Breast epithelium (tissue), 4 donors: ENCODE measurements at regions of chr9 and their contacts with region 1.

Region 1: DNA sequence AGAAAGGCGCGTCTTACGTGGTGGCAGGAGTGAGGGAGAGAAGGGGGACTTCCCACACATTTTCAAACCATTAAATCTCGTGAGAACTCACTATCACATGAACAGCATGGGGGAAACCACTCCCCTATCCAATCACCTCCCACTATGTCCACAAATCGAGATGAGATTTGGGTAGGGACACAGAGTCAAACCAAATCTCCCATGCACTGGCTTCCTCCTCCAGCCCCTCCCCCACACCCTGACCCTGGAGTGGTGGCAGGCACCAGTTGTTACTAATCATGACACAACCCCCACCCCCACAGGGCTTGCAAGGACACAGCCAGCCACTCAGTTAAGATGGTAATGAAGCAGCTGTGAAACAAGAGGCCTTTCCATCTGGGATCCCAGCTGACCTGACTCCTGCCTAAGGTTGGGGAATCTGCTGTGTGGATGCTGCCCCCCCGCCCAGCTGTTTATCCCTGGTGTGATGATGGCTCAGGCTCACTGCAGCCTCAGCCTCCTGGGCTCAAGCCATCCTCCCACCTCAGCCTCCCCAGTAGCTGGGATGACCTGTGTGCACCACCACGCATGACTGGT is 57.1 kb upstream of the FUBP3 start:
- DNase-seq: no peak
- H3K4me3 ChIP-seq: no peak overlapping the region
- H3K27ac ChIP-seq: no peak overlapping the region
- H3K4me1 ChIP-seq: no peaks in the 10 kb centered on the region
- H3K27me3 ChIP-seq: peaks cover 0 to 6% of the 10 kb centered on the region in 2 donors
- CTCF ChIP-seq: no peak
- POLR2A ChIP-seq: no peak

Region 2: GRCh38 chr9:130537346-130538050 is 15.2 kb after region 1 on chr9:
- intact Hi-C with region 1: loop called (anchors 1 kb)
- DNase-seq: no peak
- H3K4me3 ChIP-seq: no peak overlapping the region
- H3K27ac ChIP-seq: no peak overlapping the region
- H3K4me1 ChIP-seq: no peaks in the 10 kb centered on the region
- H3K27me3 ChIP-seq: peaks cover 5 to 55% of the 10 kb centered on the region in 2 donors
- CTCF ChIP-seq: no peak
- POLR2A ChIP-seq: no peak

Region 3: GRCh38 chr9:130770679-130771442 is 248.5 kb after region 1 on chr9:
- intact Hi-C with region 1: no loop called
- DNase-seq: no peak
- H3K4me3 ChIP-seq: no peak overlapping the region
- H3K27ac ChIP-seq: no peak overlapping the region
- H3K4me1 ChIP-seq: no peaks in the 10 kb centered on the region
- H3K27me3 ChIP-seq: no peaks in the 10 kb centered on the region
- CTCF ChIP-seq: peak; percentile 67 to 82 (median 75)
- POLR2A ChIP-seq: no peak